ENCODE measurements at regions of chr1 and their contacts with region 1.

Region 1: DNA sequence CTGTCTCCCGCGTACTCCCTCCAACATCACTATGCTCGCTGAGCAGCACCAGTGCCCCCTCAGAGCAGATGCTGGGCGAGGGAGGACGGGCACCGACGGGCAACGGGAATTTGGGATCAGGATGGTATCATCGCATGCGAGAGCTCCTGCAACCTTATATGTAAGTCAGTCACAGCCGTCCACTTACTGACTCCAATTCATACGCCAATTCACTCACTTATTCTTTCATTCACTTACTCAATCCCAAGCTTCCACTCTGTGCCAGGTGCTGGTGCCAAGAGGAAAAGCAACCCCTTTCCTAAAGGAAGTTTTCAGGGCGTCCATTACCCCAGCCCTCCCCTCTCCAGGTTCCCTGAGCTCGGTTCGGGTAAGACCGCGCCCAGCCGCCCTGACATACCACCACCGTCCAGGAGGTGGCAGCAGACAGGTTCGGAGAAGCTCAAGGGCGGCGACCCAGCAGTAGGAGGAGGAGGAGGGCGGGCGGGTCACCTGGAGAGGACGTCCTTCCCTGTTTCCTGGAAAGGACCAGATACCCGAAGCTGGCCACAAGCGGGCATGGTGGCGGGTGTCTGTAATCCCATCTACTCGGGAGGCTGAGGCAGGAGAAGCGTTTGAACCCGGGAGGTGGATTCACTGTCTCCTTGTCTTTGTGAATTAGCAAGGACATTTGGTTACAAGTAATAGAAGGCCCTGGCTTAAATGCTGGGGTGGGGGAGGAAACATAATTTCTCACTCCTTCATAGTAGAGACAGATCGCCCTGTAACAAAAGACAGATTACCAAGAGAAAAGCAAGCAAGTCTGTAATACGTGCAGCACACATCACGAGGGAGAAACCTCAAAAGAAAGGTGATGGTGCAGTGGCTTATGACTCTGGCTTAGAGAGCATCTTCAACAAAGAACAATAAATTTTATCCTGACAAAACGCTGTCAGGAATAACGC is 7.6 kb upstream of the IL22RA1 start:
- DNase-seq: peak; percentile 86
- CTCF ChIP-seq: peak; percentile 97

Region 2: DNA sequence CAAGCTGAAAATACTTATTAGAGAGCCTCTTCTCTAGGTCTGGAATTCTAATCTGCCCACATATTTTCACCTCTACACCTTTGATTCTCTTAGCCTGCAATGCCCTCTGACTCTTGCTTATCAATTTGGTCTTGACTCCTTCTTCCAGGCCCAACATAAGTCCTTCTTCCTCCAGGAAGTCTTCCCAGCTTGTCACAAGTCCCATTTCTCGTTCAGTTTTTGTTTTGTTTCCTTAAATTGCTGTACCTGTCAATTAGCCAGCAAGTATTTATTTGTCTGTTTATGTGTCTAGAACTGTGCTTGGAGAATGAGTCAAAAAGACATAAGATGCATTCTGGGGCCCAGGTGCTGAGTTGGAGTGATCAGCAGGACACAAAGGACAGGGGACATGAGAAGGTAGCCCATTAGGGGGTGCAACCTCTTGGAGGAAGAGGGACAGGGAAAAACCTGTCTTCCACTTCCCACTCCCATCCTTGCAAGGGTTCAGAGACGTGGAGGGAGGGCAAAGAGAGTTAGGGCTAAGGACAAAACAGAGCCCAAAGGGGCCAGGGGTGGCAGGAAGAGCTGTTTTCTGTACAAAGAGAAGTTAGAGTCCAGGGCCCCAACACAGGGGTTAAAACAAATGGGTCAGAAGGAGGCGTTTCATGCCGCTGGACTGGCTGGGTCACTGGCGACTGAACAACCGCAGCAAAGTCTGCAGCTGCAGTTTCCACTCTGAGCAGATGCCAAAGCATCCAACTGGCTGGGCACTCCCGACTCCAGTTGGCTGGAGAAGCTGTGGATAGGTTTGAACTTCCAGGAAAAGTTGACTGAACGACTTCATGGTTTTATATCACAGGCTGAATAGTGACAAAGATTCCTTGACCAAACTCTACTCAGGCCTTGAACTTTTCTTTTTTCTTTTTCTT is 226.7 kb before region 1 on chr1:
- CTCF ChIA-PET with region 1: no interaction called
- POLR2A ChIA-PET with region 1: no interaction called
- DNase-seq: no peak
- CTCF ChIP-seq: no peak

Region 3: DNA sequence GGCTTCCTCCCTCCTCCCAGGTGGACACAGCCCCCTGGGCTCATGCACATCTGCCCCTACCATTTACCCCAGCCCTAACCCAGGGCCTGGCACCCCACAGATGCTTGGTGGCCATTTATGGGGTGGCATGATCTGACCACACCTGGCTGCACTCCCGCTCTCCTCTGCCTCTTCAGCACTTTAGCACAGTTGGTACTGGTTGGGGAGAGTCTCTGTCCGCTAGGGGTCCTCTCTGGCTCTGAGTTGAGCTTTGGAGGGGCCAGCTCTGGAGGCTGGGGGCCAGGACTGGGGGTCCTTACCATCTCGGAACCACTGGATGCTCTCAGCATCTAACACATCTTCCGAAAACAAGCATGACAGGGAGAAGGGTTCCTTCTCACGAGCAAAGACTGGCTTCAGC is 56.0 kb before region 1 on chr1:
- CTCF ChIA-PET with region 1: no interaction called
- POLR2A ChIA-PET with region 1: no interaction called
- DNase-seq: no peak
- CTCF ChIP-seq: no peak

Region 4: GRCh38 chr1:24126018-24126671 is 24.4 kb before region 1 on chr1:
- CTCF ChIA-PET with region 1: interaction called, 18 read pairs
- POLR2A ChIA-PET with region 1: no interaction called
- DNase-seq: no peak
- CTCF ChIP-seq: no peak

Region 5: GRCh38 chr1:24161270-24161669 is 10.8 kb after region 1 on chr1:
- CTCF ChIA-PET with region 1: interaction called, 18 read pairs
- POLR2A ChIA-PET with region 1: no interaction called
- DNase-seq: no peak
- CTCF ChIP-seq: no peak

Region 6: GRCh38 chr1:24173638-24174575 is 23.4 kb after region 1 on chr1:
- CTCF ChIA-PET with region 1: interaction called, 18 read pairs
- POLR2A ChIA-PET with region 1: no interaction called
- DNase-seq: no peak
- CTCF ChIP-seq: no peak

Region 7: DNA sequence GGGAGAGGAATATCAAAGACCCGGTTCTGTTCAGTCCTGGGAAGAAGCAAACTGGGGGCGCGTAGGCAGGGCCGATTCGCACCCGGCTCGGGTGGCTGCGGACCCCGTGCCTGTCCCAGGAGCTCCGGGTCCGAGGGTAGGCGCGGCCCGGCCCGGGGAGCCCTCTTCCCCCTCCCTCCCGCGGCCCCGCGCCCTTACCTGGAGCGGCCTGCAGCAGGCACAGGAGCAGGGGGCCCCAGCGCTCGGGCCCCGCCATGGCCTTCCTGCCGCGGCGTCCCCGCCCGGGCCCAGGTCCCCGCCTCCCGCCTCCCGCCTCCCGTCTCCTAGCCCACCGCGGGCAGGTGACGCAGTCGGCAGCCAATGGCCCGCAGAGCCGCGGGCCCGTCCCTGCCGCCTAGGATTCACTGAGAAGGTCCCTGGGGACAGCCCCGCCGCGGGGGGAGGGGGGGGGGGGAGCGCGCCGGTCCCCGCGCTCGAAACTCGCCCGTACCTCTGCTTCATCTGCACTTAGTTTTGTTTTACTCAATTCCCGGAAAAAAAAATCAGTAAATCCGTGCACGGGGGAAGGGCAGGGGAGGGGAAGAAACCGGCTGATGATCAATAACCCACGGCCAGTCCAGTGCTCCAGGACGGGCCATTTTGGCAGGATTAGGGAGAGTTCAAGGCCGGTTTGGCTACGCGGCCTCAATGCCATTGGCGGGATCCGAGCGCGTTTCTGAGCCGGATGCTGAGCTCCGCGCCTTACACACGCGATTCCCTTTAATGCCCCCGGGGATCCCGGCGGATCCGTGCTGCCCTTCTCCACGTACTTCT is 36.7 kb after region 1 on chr1 and contains the start of gene IFNLR1:
- CTCF ChIA-PET with region 1: interaction called, 11 read pairs
- POLR2A ChIA-PET with region 1: no interaction called
- DNase-seq: peak; percentile 94
- CTCF ChIP-seq: no peak